PC-9 (cell line): ENCODE measurements at regions of chr22 and their contacts with region 1.

Region 1: DNA sequence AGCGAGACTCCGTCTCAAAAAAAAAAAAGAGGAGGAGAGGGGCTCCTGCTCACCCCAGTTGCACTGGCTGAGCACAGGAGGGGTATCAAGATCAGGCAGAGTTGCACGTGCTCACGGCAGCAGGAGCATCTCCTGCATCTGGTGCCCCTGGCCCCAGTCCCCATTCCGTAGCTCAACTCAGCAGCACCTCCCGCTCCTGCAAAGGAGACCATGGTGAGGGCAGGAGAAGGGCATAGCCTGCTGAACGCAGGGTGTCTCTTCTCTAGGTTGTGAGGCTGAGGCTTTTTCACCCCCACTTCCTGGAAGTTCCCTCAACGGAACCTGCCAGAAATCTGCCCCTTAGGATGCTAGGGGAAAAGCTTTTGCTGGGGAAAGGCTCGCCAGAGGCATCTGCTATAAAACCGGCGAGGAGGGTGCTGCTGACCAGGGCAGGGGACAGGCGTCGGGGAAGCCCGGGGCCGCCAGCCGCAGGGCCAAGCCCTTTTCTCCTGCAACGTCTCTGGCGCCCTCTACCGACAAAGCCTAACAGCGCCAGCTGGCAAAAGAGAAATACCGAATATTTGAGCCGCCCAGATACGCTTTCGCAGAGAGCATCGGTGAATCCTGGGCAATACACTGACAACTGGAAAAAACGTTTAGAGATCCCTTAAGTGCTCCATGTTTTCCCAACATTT is 1.0 kb upstream of the PPP6R2 start:
- DNase-seq: peak; percentile 82 to 88
- H3K4me3 ChIP-seq: peak overlapping the region; percentile 66
- H3K27ac ChIP-seq: peak overlapping the region; percentile 18; the same call in 1 of the 2 replicates
- H3K4me1 ChIP-seq: 0 out of 2 replicates have a peak, but pooled peaks cover 4% of the 10 kb centered on the region
- H3K27me3 ChIP-seq: no peaks in the 10 kb centered on the region
- CTCF ChIP-seq: peak; percentile 99

Region 2: GRCh38 chr22:49760630-49761571 is 581.2 kb before region 1 on chr22:
- CTCF ChIA-PET with region 1: no interaction called
- POLR2A ChIA-PET with region 1: no interaction called
- intact Hi-C with region 1: no loop called
- DNase-seq: no peak
- H3K4me3 ChIP-seq: no peak overlapping the region
- H3K27ac ChIP-seq: no peak overlapping the region
- H3K4me1 ChIP-seq: no peaks in the 10 kb centered on the region
- H3K27me3 ChIP-seq: peaks cover 60% of the 10 kb centered on the region
- CTCF ChIP-seq: no peak

Region 3: GRCh38 chr22:50244420-50245213 is 97.5 kb before region 1 on chr22 and contains the start of gene TUBGCP6:
- CTCF ChIA-PET with region 1: interaction called, 3 read pairs
- POLR2A ChIA-PET with region 1: no interaction called
- intact Hi-C with region 1: loop called (anchors 1 kb)
- DNase-seq: peak; percentile 91 to 93
- H3K4me3 ChIP-seq: peak within 1 kb of the TSS; percentile 86
- H3K27ac ChIP-seq: peak within 1 kb of the TSS; percentile 69
- H3K4me1 ChIP-seq: peaks cover 37% of the 10 kb centered on the region
- H3K27me3 ChIP-seq: no peaks in the 10 kb centered on the region
- CTCF ChIP-seq: peak; percentile 27; the same call in 1 of the 2 replicates
- total RNA-seq, gene TUBGCP6: 31.3 and 34.8 TPM in 2 replicates

Region 4: GRCh38 chr22:50271519-50271970 is 70.6 kb before region 1 on chr22:
- CTCF ChIA-PET with region 1: no interaction called
- POLR2A ChIA-PET with region 1: no interaction called
- intact Hi-C with region 1: loop called (anchors 5 kb)
- DNase-seq: peak in 1 of 2 experiments; percentile 73
- H3K4me3 ChIP-seq: peak overlapping the region; percentile 82
- H3K27ac ChIP-seq: no peak overlapping the region
- H3K4me1 ChIP-seq: peaks cover 47% of the 10 kb centered on the region
- H3K27me3 ChIP-seq: no peaks in the 10 kb centered on the region
- CTCF ChIP-seq: 0 out of 2 replicates have a peak, but pooled peaks have one; percentile 30

Region 5: DNA sequence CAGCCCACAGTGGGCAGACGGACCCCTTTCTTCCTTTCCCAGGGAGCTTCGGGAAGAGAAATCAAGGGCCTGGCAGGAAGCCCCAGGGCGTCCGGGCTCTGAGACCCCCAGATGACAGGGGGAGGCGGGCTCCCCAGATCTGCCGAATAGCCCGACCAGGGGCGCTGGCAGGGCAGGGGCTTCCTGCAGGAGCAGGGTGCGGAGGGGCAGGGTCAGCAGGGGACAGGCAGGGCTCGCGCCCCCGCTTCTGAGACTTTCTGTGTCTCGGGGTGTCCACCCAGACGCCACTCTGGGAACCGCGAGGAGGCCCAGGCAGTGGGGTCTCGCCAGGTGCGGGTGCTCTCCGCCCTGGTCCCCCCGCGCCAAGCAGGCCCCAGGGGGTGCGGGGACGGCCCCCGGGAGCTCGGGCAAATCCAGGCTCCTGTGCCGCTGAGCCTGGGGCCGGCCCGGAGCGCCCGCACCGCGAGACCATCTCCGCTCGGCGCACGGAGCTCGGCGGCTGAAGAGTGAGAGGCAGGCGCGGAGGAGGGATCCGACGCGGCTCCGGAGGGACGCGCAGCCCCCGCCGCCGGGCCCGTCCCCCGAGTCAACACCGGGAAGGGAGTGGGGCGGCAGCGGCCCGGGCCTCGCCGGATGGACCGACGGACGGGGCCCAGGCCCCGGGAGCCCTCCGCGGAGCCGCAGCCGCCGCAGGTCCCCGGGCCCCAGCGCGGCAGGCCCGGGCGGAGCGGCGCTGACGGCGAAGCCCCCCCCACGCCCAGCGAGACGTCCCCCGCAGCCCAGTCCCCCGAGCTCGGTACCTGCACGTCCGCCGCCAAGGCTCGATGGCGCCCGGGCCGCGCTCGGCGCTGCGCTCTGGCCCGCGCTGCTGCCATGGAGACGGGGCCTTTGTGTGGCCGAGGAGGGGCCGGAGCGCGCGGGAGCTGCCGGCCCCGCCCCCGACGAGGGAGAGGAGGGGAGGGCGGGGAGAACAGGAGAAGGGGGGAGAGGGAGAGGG is 35.1 kb before region 1 on chr22 and contains the start of gene PLXNB2:
- CTCF ChIA-PET with region 1: no interaction called
- POLR2A ChIA-PET with region 1: no interaction called
- intact Hi-C with region 1: loop called (anchors 1 kb)
- DNase-seq: peak; percentile 72 to 76
- H3K4me3 ChIP-seq: peak within 1 kb of the TSS; percentile 88
- H3K27ac ChIP-seq: peak within 1 kb of the TSS; percentile 92
- H3K4me1 ChIP-seq: peaks cover 42% of the 10 kb centered on the region
- H3K27me3 ChIP-seq: no peaks in the 10 kb centered on the region
- CTCF ChIP-seq: no peak
- total RNA-seq, gene PLXNB2: 250 and 260 TPM in 2 replicates

Region 6: DNA sequence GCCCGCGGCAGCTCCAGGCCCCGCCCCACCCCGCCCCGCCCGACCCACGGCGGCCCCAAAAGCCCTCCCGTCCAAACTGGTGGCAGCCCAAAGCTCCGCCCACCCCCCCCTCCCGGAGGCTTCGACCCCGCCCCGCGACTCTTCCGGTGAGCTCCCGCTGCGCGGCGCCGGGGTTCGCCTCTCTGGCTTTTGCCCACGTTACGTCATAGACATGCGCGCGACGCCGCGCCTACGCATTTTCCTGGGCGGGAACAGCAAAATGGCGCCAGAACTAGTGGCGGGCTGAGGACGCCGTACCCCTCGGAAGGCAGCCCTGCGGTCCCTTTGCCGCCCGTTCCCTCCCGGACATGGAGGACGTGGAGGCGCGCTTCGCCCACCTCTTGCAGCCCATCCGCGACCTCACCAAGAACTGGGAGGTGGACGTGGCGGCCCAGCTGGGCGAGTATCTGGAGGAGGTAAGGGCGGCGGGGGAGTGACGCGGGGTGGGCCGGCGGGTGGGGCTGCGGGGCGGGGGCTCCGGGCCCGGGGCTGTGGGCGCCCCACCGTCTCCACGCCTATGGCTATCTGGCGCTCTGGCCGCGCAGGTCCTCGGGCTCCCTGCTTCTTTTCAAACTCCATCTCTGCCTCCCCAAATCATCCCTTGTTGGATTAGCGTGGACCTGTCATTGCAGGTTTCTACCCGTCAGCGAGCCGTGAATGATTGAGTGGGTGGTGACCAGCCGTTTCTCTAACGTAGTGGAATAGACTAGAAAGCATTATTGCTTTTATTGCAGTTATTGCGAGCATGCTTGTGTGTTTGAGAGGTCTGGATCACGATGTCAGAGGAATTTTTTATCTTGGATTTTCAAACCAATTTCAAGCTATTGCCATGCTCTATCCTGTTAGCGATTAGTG is 166.1 kb after region 1 on chr22 and contains the start of gene NCAPH2:
- CTCF ChIA-PET with region 1: no interaction called
- POLR2A ChIA-PET with region 1: interaction called, 8 read pairs
- intact Hi-C with region 1: loop called (anchors 5 kb)
- DNase-seq: peak; percentile 93 to 94
- H3K4me3 ChIP-seq: peak within 1 kb of the TSS; percentile 97
- H3K27ac ChIP-seq: peak within 1 kb of the TSS; percentile 48
- H3K4me1 ChIP-seq: peaks cover 19% of the 10 kb centered on the region
- H3K27me3 ChIP-seq: no peaks in the 10 kb centered on the region
- CTCF ChIP-seq: no peak
- total RNA-seq, gene NCAPH2: 58.8 and 62.9 TPM in 2 replicates